Activated B cell treated with CpG ODN at 0.5 μM for 24 hours (primary cell): ENCODE measurements at regions of chr12 and their contacts with region 1.

Region 1: DNA sequence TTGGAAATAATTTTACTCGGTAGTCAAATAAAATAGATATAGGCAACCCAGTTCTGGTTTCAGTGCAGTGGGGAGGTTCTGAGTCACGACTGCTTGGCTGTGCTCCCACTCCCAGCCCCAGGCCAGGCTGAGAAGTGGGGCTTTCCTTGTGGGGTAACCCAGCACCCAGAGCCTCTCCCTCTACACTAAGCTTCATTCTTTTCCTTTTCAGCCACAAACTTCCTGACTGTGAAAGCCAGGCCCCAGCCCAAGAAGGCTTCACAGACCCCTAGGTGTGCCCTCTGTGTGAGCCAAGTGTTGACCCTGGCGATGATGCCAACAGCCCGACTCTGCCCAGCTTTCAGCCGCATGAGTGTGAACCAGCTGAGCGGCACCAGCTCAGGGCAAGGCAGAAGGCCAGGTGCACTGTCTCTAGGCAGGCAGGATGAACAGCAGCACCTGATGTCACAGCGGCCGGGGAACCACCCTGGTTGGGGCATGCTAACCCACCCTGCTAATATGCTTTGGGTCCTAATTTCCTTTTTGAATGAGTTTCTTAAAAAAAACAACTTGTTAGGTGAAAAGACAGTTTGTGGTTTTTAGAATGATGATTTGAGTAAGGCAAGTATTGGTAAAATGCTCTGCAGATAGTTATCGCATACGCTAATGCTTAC is 42.2 kb upstream of the ATP23 start:
- DNase-seq: peak; percentile 70
- ATAC-seq: peak; percentile 83
- H3K4me3 Mint-ChIP-seq: peak overlapping the region; percentile 80
- H3K27ac Mint-ChIP-seq: peak overlapping the region; percentile 100
- H3K4me1 Mint-ChIP-seq: peaks cover 62% of the 10 kb centered on the region
- H3K27me3 Mint-ChIP-seq: no peaks in the 10 kb centered on the region
- CTCF ChIP-seq: no peak

Region 2: GRCh38 chr12:57803319-57803893 is 95.7 kb before region 1 on chr12:
- CTCF ChIA-PET with region 1: interaction called, 34 read pairs
- POLR2A ChIA-PET with region 1: no interaction called
- intact Hi-C with region 1: loop called (anchors 2 kb)
- DNase-seq: no peak
- ATAC-seq: peak; percentile 54
- H3K4me3 Mint-ChIP-seq: no peak overlapping the region
- H3K27ac Mint-ChIP-seq: no peak overlapping the region
- H3K4me1 Mint-ChIP-seq: no peaks in the 10 kb centered on the region
- H3K27me3 Mint-ChIP-seq: no peaks in the 10 kb centered on the region
- CTCF ChIP-seq: no peak

Region 3: DNA sequence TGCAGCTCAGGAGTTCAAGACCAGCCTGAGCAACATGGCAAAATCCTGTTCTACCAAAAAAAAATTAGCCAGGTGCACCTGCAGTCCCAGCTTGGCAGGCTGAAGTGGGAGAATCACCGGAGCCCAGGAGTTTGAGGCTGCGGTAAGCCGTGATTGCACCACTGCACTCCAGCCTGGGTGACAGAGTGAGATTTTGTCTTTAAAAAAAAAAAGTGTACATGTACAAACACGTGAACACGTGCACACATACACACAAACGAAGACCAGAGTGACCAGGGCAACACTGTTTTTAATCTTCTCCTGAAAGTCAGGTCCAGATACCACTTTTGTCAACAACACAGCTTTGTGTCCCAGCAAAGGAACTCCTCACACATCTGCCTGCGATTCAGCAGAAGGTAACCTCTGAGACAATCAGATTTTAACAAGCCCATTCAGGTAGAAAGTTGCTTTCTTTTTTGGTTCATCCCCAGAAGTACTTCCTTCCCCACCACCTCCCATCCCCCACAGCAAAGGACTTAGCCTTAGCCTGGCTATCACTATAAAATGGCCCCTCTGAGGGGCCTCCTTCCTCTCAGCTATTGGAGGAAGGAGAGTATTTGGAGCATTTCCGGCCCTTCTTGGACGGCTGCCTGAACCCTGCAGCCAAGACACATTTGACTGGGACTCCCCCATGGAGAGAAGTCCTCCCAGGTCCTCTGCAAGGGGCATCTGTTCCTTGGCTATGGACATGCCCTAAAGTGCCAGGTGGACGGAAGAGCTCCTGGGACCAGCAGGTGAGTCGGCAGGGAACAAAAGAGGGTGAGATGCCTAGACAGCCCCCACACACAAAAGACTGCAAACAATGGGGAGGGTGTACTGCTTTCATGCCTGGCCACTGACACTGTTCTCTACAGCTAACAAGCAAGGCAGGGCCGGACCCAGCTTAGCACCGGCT is 62.4 kb before region 1 on chr12:
- CTCF ChIA-PET with region 1: interaction called, 96 read pairs
- POLR2A ChIA-PET with region 1: interaction called, 91 read pairs
- intact Hi-C with region 1: loop called (anchors 1 kb)
- DNase-seq: no peak
- ATAC-seq: peak; percentile 20
- H3K4me3 Mint-ChIP-seq: peak overlapping the region; percentile 64
- H3K27ac Mint-ChIP-seq: peak overlapping the region; percentile 84
- H3K4me1 Mint-ChIP-seq: peaks cover 97% of the 10 kb centered on the region
- H3K27me3 Mint-ChIP-seq: no peaks in the 10 kb centered on the region
- CTCF ChIP-seq: no peak

Region 4: DNA sequence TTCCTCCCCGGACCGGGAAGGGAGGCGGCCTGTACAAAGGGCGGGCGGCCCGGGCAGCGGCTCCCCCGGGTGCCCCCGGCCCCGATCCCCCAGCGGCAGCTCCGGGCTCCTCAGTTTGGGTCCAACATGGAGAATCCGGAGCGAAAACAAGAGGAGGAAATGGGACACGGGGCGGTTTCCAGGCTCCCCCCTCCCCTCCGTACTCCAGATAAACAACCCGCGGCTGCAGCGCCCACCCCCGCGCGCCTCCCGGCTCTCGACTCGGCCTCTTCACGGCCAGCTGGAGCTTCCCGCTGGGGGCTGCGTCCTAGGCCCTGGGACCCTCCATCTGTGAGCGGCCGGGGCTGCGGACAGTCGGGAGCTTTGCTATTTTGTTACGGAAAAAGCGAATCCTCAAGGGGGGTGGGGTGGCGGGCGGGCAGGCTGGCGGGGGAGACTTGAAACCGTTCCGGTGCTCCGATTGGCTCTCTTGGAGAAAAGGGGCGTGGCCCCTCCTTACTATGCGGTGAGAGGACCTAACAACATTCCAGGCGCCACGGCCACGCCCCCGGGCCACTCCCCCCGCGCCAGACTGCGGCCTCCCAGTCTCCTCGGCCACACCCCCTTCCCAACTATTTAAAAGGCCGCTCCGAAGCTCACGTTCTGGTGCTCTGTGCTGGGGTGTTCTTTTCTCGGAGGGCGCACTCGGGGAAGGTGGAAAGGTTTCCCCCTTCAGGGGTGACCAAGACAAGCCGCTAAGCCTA is 52.4 kb before region 1 on chr12 and contains the start of gene CTDSP2:
- CTCF ChIA-PET with region 1: interaction called, 10 read pairs
- POLR2A ChIA-PET with region 1: interaction called, 122 read pairs
- intact Hi-C with region 1: loop called (anchors 1 kb)
- DNase-seq: peak; percentile 81
- ATAC-seq: peak; percentile 47
- H3K4me3 Mint-ChIP-seq: peak within 1 kb of the TSS; percentile 86
- H3K27ac Mint-ChIP-seq: peak within 1 kb of the TSS; percentile 85
- H3K4me1 Mint-ChIP-seq: peaks cover 45% of the 10 kb centered on the region
- H3K27me3 Mint-ChIP-seq: peaks cover 8% of the 10 kb centered on the region
- CTCF ChIP-seq: no peak
- total RNA-seq, gene CTDSP2: 73.2 and 81.5 TPM in 2 replicates

Region 5: DNA sequence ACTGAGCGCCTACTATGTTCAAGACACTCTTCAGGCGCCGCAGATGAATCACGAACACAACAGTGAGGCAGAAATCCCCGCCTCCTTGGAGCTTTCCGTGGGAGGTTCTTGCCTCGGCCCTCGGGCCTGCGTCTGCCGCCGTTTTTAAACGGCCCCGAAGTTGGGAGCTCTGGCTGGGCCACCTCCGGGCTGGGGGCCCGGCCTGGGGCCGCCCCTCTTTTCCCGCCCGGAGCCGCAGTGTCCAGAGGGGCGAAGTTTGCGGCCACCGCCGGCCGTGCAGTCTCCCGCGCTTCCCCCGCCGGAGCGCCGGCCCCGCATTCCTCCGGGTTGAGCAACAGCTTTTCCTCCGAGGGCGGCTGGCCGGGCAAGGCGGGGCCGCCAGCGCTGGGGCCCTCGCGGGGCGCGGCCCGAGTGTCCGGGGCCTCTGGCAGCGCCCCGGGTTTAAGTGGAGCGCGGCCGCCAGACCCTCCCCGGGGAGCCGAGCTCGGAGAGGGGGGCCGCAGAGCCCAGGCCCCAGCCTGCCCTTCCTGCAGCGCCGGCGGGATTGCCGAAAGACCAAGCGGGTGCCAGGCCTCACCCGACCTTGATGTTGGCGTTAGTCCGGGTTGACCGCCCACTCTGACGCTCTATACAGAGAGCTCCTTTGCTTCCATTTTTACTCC is 33.9 kb before region 1 on chr12:
- CTCF ChIA-PET with region 1: interaction called, 15 read pairs
- POLR2A ChIA-PET with region 1: interaction called, 6 read pairs
- intact Hi-C with region 1: loop called (anchors 1 kb)
- DNase-seq: peak; percentile 39
- ATAC-seq: peak; percentile 86
- H3K4me3 Mint-ChIP-seq: peak overlapping the region; percentile 69
- H3K27ac Mint-ChIP-seq: no peak overlapping the region
- H3K4me1 Mint-ChIP-seq: peaks cover 8% of the 10 kb centered on the region
- H3K27me3 Mint-ChIP-seq: peaks cover 22% of the 10 kb centered on the region
- CTCF ChIP-seq: no peak

Region 6: GRCh38 chr12:57875753-57876547 is 23.2 kb before region 1 on chr12:
- CTCF ChIA-PET with region 1: no interaction called
- POLR2A ChIA-PET with region 1: no interaction called
- intact Hi-C with region 1: no loop called
- DNase-seq: no peak
- ATAC-seq: no peak
- H3K4me3 Mint-ChIP-seq: no peak overlapping the region
- H3K27ac Mint-ChIP-seq: no peak overlapping the region
- H3K4me1 Mint-ChIP-seq: peaks cover 4% of the 10 kb centered on the region
- H3K27me3 Mint-ChIP-seq: no peaks in the 10 kb centered on the region
- CTCF ChIP-seq: no peak

Region 7: DNA sequence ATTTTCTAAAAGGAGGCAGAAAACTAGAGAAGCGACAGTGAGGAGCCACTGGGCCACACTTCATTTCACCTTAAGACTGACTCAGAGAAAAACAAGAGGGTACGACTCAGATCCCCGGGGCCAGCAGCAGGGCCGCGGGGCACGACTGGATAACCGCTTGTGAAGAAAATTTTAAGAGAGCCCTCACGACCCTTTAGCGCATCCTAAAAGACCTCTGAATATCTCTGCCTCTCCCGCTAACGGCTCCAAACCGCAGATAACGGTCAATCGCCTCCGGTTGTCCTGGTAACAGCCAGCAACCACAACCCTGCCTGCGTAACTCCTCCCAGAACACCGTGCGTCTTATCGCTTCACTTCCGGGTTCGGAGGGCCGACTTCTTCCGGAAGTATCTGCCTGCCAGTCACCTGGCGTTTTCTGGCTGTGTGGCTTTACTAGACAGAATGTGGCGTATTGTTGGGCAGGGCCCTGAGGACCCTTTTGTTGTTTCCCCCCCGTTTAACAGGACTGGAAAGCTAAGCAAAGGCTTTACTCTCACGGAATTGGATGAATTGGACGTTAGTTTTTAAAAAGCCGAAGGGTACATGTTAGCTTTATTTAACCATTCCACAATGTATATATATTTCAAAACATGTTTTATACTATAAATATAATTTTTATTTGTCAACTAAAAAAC is 36.8 kb after region 1 on chr12:
- CTCF ChIA-PET with region 1: no interaction called
- POLR2A ChIA-PET with region 1: interaction called, 12 read pairs
- intact Hi-C with region 1: loop called (anchors 2 kb)
- DNase-seq: peak; percentile 78
- ATAC-seq: peak; percentile 91
- H3K4me3 Mint-ChIP-seq: peak overlapping the region; percentile 99
- H3K27ac Mint-ChIP-seq: peak overlapping the region; percentile 100
- H3K4me1 Mint-ChIP-seq: peaks cover 24% of the 10 kb centered on the region
- H3K27me3 Mint-ChIP-seq: no peaks in the 10 kb centered on the region
- CTCF ChIP-seq: no peak

Region 8: DNA sequence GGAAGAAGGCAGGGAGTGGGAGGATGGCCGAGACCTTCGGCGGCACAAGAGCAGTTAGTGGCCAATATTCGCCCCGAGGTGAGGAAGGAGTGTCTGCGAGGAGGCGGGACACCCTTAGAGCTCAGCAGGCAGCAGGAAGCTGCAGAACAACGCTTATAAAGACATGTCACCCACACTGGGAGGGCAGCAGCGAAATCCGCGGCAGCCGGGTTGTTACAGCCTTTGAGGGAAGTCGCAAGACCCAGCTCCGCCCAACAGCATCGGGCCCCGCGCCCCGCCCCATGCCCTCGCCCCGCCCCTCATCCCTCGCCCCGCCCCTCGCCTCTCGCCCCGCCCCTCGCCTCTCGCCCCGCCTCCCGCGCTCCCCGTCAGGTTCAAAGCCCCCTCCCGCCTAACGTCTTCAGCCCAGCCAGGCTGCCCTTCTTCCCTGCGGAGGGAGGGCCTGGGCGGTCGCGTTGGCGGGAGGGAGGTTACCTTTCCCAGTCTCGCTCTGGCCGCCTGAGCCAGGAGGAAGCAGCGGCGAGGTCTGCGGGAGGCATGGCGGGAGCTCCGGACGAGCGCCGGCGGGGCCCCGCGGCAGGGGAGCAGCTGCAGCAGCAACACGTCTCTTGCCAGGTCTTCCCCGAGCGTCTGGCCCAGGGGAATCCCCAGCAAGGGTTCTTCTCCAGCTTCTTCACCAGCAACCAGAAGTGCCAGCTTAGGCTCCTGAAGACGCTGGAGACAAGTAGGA is 42.2 kb after region 1 on chr12 and contains the start of gene ATP23:
- CTCF ChIA-PET with region 1: no interaction called
- POLR2A ChIA-PET with region 1: interaction called, 12 read pairs
- intact Hi-C with region 1: loop called (anchors 2 kb)
- DNase-seq: peak; percentile 86
- ATAC-seq: peak; percentile 89
- H3K4me3 Mint-ChIP-seq: peak within 1 kb of the TSS; percentile 96
- H3K27ac Mint-ChIP-seq: peak within 1 kb of the TSS; percentile 95
- H3K4me1 Mint-ChIP-seq: peaks cover 22% of the 10 kb centered on the region
- H3K27me3 Mint-ChIP-seq: no peaks in the 10 kb centered on the region
- CTCF ChIP-seq: no peak
- total RNA-seq, gene ATP23: 3.0 and 3.9 TPM in 2 replicates

Region 9: GRCh38 chr12:57958061-57958657 is 59.0 kb after region 1 on chr12:
- CTCF ChIA-PET with region 1: no interaction called
- POLR2A ChIA-PET with region 1: no interaction called
- intact Hi-C with region 1: no loop called
- DNase-seq: no peak
- ATAC-seq: no peak
- H3K4me3 Mint-ChIP-seq: no peak overlapping the region
- H3K27ac Mint-ChIP-seq: no peak overlapping the region
- H3K4me1 Mint-ChIP-seq: no peaks in the 10 kb centered on the region
- H3K27me3 Mint-ChIP-seq: no peaks in the 10 kb centered on the region
- CTCF ChIP-seq: no peak